ENCODE measurements at regions of chr22 and their contacts with region 1.

Region 1: DNA sequence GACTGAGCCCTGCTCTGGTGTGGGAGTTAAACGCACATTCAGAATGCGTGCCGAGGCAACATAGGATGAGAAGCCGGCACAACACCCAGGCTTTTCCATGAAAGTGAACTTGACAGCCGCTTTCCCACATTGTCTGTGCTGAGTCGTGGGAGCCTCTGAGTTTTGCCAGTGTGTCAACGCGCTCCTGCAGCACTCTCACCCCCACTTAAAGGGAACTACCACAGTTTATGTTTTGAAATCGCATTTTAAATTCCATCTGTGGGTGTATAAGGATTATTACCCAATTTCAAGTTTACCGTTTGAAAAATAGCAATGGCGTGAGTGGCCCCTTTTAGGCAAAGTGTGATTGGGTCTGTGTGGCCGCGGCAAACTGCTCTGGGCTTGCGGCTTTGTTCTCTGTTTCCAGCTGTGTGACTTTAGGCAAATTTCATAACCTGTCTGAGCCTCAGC is 81.5 kb downstream of the FBLN1 start:
- DNase-seq: peak; percentile 53
- H3K4me3 ChIP-seq: no peak overlapping the region
- H3K27ac ChIP-seq: no peak overlapping the region
- H3K4me1 ChIP-seq: no peaks in the 10 kb centered on the region
- H3K27me3 ChIP-seq: no peaks in the 10 kb centered on the region

Region 2: GRCh38 chr22:45968751-45969413 is 384.7 kb after region 1 on chr22:
- in situ Hi-C with region 1: loop called (anchors 10 kb)
- DNase-seq: peak; percentile 80
- H3K4me3 ChIP-seq: no peak overlapping the region
- H3K27ac ChIP-seq: no peak overlapping the region
- H3K4me1 ChIP-seq: peaks cover 27% of the 10 kb centered on the region
- H3K27me3 ChIP-seq: peaks cover 23% of the 10 kb centered on the region

Measured in GM23248 (cell line).